Endothelial cell of umbilical vein (primary cell): ENCODE measurements at regions of chr1 and their contacts with region 1.

Region 1: DNA sequence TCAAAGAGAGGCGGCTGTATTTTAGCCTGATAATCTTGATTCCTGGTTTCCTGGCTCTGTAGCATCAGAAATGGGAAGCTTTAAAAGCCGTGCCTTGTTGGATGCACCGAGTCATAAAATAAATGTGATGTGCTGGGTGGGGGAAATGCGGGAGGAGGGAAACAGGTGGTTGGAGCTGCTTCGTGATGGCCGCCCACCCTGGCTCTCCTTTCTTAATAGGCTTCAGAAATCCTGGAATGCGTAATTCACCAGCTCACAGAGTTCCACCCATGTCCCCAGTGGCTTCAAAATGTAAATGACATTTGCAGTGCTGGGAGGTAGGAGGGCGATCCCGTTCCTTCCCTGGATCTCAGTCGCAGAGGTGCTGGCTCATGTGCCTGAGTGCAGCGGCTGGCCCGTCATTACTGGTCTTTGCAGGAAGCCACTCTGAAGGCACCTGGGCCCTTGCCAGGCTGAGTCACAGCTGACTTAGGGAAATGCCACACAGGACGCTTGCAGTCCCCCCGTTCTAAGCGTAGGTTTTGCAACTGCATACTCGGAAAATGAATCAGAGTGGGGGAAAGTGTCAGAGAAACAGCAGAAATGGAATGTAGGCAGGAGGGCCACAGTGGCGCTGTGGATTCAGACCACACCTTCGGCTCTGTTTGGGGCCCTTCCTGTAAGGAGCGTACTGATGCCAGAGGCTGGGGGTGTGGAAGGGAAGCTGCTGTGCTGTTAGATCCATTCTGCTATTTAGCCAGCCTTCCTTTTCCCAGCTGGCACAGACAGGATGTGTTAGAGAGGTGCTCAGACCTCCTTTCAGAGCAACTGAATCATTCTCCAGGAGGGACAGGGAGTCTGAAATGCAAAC is 37.6 kb downstream of the GALNT2 start:
- DNase-seq: peak; percentile 96
- H3K4me3 ChIP-seq: peak overlapping the region in 1 of 3 experiments; percentile 3
- H3K27ac ChIP-seq: peak overlapping the region; percentile 76
- H3K4me1 ChIP-seq: peaks cover 25% of the 10 kb centered on the region
- H3K27me3 ChIP-seq: no peaks in the 10 kb centered on the region
- CTCF ChIP-seq: peak in 1 of 2 donors; percentile 18
- POLR2A ChIP-seq: peak; percentile 19

Region 2: GRCh38 chr1:229661022-229661877 is 443.4 kb before region 1 on chr1:
- CTCF ChIA-PET with region 1: interaction called, 5 read pairs
- POLR2A ChIA-PET with region 1: no interaction called
- dilution Hi-C with region 1: no loop called
- intact Hi-C with region 1: loop called (anchors 5 kb)
- DNase-seq: peak; percentile 61
- H3K4me3 ChIP-seq: no peak overlapping the region
- H3K27ac ChIP-seq: no peak overlapping the region
- H3K4me1 ChIP-seq: peaks cover 17% of the 10 kb centered on the region
- H3K27me3 ChIP-seq: no peaks in the 10 kb centered on the region
- CTCF ChIP-seq: peak; percentile 82 to 92
- POLR2A ChIP-seq: no peak

Region 3: DNA sequence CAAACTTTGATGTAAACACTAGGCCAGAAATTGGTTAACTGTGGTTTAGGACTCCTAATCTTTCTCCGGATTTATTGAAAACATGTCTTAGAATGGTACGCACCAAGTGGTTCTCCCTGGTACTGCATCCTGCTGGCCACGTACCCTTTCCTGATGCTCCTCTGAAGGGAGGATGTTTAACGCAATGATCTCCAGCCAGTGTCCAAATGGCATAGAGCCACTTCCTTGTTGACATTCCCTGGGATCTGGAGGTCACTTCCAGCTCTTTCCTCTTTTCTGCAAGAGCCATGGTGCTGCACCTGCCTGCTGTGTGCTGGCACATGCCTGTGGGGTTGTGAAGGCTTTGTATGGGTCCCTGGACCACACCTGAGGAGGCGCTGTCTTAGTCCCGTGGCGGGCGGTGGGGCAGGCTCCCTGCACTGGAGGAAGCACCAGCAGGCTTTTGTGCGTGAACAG is 16.3 kb after region 1 on chr1:
- CTCF ChIA-PET with region 1: interaction called, 10 read pairs
- POLR2A ChIA-PET with region 1: no interaction called
- dilution Hi-C with region 1: no loop called
- intact Hi-C with region 1: no loop called
- DNase-seq: peak; percentile 17
- H3K4me3 ChIP-seq: no peak overlapping the region
- H3K27ac ChIP-seq: no peak overlapping the region
- H3K4me1 ChIP-seq: no peaks in the 10 kb centered on the region
- H3K27me3 ChIP-seq: no peaks in the 10 kb centered on the region
- CTCF ChIP-seq: peak; percentile 53 to 58
- POLR2A ChIP-seq: no peak

Region 4: DNA sequence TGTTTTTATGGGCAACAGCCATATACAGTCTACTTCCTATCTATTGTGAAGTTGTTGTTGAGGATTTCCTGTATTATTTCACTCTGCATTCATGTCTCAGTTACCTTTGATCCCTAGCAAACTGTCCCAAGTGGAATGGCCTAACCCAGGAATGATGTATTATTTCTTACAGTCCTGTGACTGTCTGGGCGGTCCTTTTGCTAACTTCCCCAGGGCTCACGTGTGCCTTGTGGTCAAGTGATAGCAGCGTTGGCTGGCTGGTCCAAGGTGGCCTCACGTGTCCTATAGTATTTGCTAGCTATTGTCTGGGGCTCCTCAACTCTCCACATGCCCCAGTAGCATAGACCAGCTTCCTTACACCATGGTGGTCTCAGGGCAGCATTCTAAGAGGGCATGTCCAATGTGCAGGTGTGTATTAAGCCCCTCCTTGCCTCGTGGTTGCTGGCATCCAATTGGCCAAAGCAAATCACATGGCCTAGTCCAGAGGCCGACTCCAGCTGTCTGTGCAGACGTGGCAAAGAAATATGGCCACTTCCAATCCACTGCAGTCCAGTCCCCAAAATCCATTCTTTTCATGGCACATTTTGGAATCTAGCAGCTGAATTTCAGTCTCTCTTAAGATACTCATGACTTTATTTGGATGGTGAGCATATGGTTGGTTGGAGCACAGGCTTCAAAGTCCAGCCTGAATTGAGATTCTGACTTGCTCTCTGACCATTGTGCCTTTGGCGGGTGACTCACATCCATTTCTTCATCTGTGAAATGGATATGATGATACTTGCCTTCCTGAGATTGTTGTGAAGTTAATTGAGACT is 56.5 kb after region 1 on chr1:
- CTCF ChIA-PET with region 1: no interaction called
- POLR2A ChIA-PET with region 1: no interaction called
- dilution Hi-C with region 1: no loop called
- intact Hi-C with region 1: loop called (anchors 1 kb)
- DNase-seq: peak; percentile 93
- H3K4me3 ChIP-seq: no peak overlapping the region
- H3K27ac ChIP-seq: no peak overlapping the region
- H3K4me1 ChIP-seq: peaks cover 15% of the 10 kb centered on the region
- H3K27me3 ChIP-seq: peaks cover 0 to 5% of the 10 kb centered on the region in 2 experiments
- CTCF ChIP-seq: no peak
- POLR2A ChIP-seq: no peak

Region 5: DNA sequence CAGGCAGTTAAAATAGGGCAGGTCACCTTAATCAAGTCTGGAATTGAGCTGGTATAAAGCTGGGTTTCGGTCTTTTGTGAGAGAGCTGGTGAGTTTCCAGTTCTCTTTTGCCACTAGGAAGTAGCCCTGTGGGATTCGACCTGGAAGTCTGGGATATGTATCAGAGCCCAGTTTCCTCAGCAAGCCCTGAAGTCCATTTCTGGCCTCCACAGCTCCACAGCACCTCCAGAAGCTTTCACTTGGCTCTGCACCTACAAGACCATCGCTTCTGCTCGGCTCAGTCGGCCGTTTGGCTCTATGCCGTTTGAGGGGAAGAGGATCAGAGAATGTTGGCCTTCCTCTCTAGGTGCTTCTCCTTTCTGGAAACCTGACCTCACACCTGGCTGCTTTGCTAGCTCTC is 110.4 kb after region 1 on chr1:
- CTCF ChIA-PET with region 1: interaction called, 10 read pairs
- POLR2A ChIA-PET with region 1: no interaction called
- dilution Hi-C with region 1: no loop called
- intact Hi-C with region 1: loop called (anchors 2 kb)
- DNase-seq: peak; percentile 92
- H3K4me3 ChIP-seq: no peak overlapping the region
- H3K27ac ChIP-seq: peak overlapping the region; percentile 33
- H3K4me1 ChIP-seq: peaks cover 27% of the 10 kb centered on the region
- H3K27me3 ChIP-seq: no peaks in the 10 kb centered on the region
- CTCF ChIP-seq: peak; percentile 70 to 87
- POLR2A ChIP-seq: no peak